Left colon (tissue), 2 donors: ENCODE measurements at regions of chr15 and their contacts with region 1.

Region 1: GRCh38 chr15:100349696-100350433 is 8.1 kb upstream of the ADAMTS17 start:
- DNase-seq: peak; percentile 91 to 95
- ATAC-seq: peak; percentile 94

Region 2: DNA sequence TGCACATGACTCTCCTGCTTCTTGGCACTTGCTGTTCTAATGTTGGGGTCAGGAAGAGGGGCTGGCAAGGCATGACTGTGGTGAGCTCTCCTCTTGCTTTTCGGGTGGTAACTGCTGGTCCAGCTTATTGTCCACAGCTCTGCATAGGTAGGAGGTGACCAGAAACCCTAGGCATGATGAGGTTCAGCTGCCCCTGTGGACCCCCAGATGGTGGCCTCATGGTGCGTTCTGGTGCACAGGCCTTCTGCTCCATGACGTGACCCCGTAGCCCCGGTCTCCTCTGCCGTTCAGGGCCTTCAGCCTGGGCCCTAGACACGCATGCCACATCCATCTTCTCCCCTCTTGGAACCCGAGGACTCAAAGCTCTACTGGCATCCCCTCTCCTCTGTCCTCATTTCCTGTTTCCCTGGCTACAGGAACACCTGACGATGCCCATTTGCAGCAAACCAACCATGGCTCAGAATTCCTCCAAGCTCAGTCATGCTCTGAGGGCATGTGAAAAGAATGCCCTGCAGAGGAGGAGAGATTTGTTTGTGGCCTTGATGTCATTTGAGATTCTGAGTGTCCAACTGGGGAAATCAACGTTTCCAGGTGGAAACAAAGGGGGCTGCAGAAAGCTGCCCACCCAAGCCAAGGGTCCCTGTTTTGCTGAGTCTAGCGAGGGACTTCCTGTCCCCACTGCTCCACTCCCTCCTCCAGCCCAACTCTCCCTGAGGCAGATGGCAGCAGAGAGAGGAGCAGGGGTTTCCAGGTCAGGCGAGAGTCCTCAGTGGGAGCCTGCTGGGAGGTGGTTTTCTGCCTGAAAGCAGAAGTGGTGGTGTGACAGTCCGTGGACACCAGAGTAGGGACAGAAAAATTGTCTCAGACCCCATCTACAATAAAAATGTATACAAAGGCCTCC is 417.9 kb before region 1 on chr15:
- intact Hi-C with region 1: loop called in 1 of 2 experiments (anchors 10 kb)
- DNase-seq: no peak
- ATAC-seq: no peak

Region 3: GRCh38 chr15:100152463-100152862 is 197.4 kb before region 1 on chr15:
- intact Hi-C with region 1: no loop called
- DNase-seq: no peak
- ATAC-seq: no peak

Region 4: GRCh38 chr15:100572362-100572983 is 222.6 kb after region 1 on chr15:
- intact Hi-C with region 1: loop called in 1 of 2 experiments (anchors 5 kb)
- DNase-seq: no peak
- ATAC-seq: no peak